ENCODE measurements at regions of chr3 and their contacts with region 1.

Region 1: DNA sequence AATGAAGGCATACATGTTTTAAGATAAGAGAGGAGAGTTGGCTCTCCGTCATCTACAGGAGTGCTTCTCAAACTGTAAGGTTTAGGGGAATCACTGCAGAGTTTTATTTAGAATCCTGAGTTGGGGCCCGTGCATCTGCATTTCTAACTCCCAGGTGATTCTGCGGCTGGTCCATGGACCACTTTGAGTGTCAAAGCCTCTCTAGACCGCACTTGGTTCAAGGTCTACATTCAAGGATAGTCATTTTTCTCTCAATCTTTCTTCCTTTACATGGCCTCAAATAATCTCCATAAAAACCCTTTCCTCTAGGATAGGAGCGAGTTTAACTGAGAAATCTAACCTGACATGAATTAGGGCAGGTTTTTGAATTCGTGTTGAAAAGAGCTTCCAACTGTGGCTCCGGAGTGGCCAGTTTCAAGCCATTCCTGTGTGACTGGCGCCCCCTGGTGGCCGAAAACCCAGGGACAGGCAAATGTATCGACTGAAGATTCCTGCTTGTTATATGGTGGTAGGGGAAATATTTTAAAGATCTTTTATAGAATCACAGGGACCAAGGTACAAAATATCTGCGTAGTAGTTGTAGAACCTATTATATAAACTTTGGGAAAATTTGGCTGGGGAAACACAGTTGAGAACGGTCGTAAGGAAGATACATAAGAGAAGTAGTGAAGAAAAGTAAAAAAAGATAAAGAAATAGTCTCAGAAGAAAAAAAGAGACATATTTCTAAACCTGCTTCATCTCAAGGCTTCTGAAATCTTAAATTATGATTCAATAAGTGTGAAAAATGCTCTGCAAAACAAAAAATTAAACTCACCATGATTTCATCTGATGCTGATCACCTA is 11.9 kb downstream of the GABRR3 start:
- DNase-seq: peak; percentile 87 to 94 (median 90)
- ATAC-seq: peak; percentile 82
- H3K4me3 ChIP-seq: no peak overlapping the region
- H3K27ac ChIP-seq: no peak overlapping the region
- H3K4me1 ChIP-seq: no peaks in the 10 kb centered on the region
- H3K27me3 ChIP-seq: no peaks in the 10 kb centered on the region
- CTCF ChIP-seq: peak; percentile 84 to 95 (median 91)
- POLR2A ChIP-seq: no peak

Region 2: GRCh38 chr3:96631050-96631449 is 1392.1 kb before region 1 on chr3:
- intact Hi-C with region 1: no loop called
- DNase-seq: no peak
- ATAC-seq: no peak
- H3K4me3 ChIP-seq: no peak overlapping the region
- H3K27ac ChIP-seq: no peak overlapping the region
- H3K4me1 ChIP-seq: no peaks in the 10 kb centered on the region
- H3K27me3 ChIP-seq: no peaks in the 10 kb centered on the region
- CTCF ChIP-seq: no peak
- POLR2A ChIP-seq: no peak

Region 3: GRCh38 chr3:97795956-97796355 is 227.2 kb before region 1 on chr3:
- intact Hi-C with region 1: loop called (anchors 5 kb)
- DNase-seq: no peak
- ATAC-seq: no peak
- H3K4me3 ChIP-seq: no peak overlapping the region
- H3K27ac ChIP-seq: no peak overlapping the region
- H3K4me1 ChIP-seq: no peaks in the 10 kb centered on the region
- H3K27me3 ChIP-seq: no peaks in the 10 kb centered on the region
- CTCF ChIP-seq: no peak
- POLR2A ChIP-seq: no peak

Region 4: DNA sequence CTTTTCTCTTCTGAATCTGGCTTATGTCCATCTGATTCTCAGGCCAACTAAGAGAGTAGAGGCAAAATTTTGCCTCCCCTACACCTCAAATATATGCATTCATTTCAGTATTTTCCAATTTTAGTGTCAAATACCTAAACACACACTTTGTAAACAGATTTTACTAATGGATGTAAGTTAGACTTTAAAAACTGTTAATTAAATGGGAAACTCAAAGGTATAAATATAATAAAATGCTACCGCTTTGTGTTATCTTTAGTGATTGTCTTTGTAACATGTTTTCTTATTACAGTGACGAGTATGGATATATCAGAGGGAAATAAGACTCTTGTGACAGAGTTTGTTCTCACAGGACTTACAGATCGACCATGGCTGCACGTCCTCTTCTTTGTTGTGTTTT is 63.7 kb after region 1 on chr3 and contains the start of gene OR5AC2:
- intact Hi-C with region 1: no loop called
- DNase-seq: no peak
- ATAC-seq: no peak
- H3K4me3 ChIP-seq: no peak within 1 kb of the TSS
- H3K27ac ChIP-seq: no peak within 1 kb of the TSS
- H3K4me1 ChIP-seq: no peaks in the 10 kb centered on the region
- H3K27me3 ChIP-seq: no peaks in the 10 kb centered on the region
- CTCF ChIP-seq: no peak
- POLR2A ChIP-seq: no peak
- total RNA-seq, gene OR5AC2: not detected

Region 5: DNA sequence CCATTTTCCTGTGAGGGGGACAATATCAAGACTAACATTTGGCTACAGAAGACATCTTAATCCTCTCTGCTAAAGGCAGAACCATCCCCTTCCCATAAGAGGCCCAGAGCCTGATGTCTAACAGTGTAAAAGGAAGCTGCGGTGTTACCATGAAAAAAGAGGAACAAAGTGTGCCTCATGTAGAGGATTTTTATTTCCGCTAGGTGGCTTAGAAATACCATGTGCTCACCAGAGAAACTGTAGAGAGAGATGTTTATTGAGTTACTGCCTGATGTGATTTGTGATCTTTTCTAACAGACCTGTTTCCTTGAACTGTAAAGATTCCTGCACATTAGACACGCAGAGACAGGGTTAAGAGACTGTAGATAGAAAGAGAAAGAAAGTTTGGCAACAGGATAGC is 165.3 kb after region 1 on chr3:
- intact Hi-C with region 1: no loop called
- DNase-seq: no peak
- ATAC-seq: no peak
- H3K4me3 ChIP-seq: no peak overlapping the region
- H3K27ac ChIP-seq: no peak overlapping the region
- H3K4me1 ChIP-seq: no peaks in the 10 kb centered on the region
- H3K27me3 ChIP-seq: no peaks in the 10 kb centered on the region
- CTCF ChIP-seq: peak in 2 of 7 experiments; percentile 17 to 29
- POLR2A ChIP-seq: no peak

Region 6: GRCh38 chr3:98705706-98706105 is 682.5 kb after region 1 on chr3:
- intact Hi-C with region 1: no loop called
- DNase-seq: no peak
- ATAC-seq: no peak
- H3K4me3 ChIP-seq: no peak overlapping the region
- H3K27ac ChIP-seq: no peak overlapping the region
- H3K4me1 ChIP-seq: peaks cover 16% of the 10 kb centered on the region
- H3K27me3 ChIP-seq: no peaks in the 10 kb centered on the region
- CTCF ChIP-seq: no peak
- POLR2A ChIP-seq: no peak